Colonic mucosa (tissue), 4 donors: ENCODE measurements at regions of chr7 and their contacts with region 1.

Region 1: GRCh38 chr7:5450549-5451372 is 27.1 kb upstream of the TNRC18 start:
- DNase-seq: peak; percentile 58
- H3K4me3 ChIP-seq: no peak overlapping the region
- H3K27ac ChIP-seq: no peak overlapping the region
- H3K4me1 ChIP-seq: no peaks in the 10 kb centered on the region
- H3K27me3 ChIP-seq: no peaks in the 10 kb centered on the region
- CTCF ChIP-seq: peak; percentile 49

Region 2: GRCh38 chr7:5243261-5243660 is 207.5 kb before region 1 on chr7:
- intact Hi-C with region 1: loop called (anchors 2 kb)
- DNase-seq: no peak
- H3K4me3 ChIP-seq: no peak overlapping the region
- H3K27ac ChIP-seq: no peak overlapping the region
- H3K4me1 ChIP-seq: no peaks in the 10 kb centered on the region
- H3K27me3 ChIP-seq: no peaks in the 10 kb centered on the region
- CTCF ChIP-seq: no peak

Region 3: DNA sequence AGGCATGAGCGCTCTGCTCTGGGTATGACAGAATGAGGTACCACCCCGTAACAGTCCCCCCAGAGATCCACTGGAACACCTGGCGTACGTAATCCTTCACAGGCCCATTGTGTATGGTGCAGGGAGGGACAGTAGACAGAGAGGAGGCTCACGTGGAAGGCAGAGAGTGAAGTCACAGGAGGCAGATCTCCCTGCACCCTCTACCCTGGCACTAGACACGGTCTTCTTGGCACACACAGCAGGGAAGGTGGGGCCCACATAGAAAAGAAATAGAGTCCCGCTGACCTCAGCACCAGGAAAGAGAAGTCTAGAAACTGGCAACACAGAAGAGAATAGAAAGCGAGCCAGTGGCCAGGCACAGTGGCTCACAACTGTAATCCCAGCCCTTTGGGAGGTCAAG is 116.1 kb before region 1 on chr7:
- intact Hi-C with region 1: no loop called
- DNase-seq: no peak
- H3K4me3 ChIP-seq: no peak overlapping the region
- H3K27ac ChIP-seq: no peak overlapping the region
- H3K4me1 ChIP-seq: peaks cover 4% of the 10 kb centered on the region
- H3K27me3 ChIP-seq: no peaks in the 10 kb centered on the region
- CTCF ChIP-seq: no peak

Region 4: DNA sequence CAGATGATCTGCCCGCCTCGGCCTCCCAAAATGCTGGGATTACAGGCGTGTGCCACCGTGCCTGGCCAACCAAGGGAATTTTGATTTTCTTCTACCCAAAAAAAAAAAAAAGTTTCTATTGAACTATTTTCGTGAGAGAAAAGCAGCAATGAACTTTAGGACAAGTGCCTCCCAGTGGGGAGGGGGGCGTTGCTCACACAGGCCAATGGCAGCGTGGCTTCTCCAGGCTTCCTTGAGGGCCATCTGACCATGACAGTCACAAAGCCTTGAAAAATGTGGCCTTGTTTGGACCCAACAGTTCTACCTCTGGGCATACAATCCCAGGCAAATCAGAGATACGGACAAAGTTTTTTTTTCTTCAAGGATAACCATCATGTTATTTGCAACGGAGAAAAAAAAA is 83.1 kb before region 1 on chr7:
- intact Hi-C with region 1: loop called (anchors 5 kb)
- DNase-seq: no peak
- H3K4me3 ChIP-seq: no peak overlapping the region
- H3K27ac ChIP-seq: no peak overlapping the region
- H3K4me1 ChIP-seq: no peaks in the 10 kb centered on the region
- H3K27me3 ChIP-seq: no peaks in the 10 kb centered on the region
- CTCF ChIP-seq: no peak

Region 5: GRCh38 chr7:5557920-5558401 is 107.2 kb after region 1 on chr7:
- intact Hi-C with region 1: no loop called
- DNase-seq: peak; percentile 77
- H3K4me3 ChIP-seq: peak overlapping the region; percentile 3
- H3K27ac ChIP-seq: peak overlapping the region; percentile 99
- H3K4me1 ChIP-seq: peaks cover 13% of the 10 kb centered on the region
- H3K27me3 ChIP-seq: no peaks in the 10 kb centered on the region
- CTCF ChIP-seq: no peak